Lower leg skin (tissue), 4 donors: ENCODE measurements at regions of chr3 and their contacts with region 1.

Region 1: DNA sequence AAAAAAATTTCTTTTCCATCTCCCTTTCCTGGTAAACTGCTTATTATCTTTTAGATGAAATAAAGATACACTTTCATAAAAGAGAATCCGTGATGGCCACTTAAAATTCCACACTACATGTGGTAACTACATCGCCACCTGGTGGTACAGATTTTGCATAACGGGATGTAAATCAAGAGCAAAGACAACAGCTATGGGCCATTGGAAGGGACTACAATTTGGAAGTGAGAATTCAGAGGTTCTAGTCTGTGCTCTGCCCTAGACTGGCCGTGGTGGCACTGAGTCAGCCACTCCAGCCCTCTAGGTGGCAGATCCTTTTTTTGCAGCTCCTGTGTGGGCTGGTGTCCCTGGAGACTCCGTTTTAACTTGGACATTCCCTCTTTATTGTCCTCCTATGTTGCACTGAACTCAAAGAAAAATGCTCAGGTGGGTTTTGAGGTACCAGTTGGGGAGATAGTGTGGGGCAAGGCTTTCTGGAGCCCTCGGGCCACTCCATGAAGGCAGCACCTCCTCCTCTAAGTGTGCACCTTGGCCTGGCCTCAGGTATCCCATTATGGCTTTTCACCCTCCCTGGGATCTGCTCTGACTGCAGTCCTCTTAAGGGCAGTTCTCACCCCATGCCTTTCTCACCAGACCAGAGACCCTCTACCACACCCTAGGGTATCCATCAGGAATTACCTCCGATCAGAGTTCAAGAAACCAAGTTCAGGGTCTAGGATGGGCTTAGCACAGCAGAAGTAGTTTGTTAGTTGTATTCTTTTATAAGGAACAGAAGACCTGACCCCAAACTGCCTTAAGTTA is 54.9 kb downstream of the SPSB4 start:
- DNase-seq: peak; percentile 81 to 85
- H3K4me3 ChIP-seq: no peak overlapping the region
- CTCF ChIP-seq: no peak
- POLR2A ChIP-seq: no peak

Region 2: DNA sequence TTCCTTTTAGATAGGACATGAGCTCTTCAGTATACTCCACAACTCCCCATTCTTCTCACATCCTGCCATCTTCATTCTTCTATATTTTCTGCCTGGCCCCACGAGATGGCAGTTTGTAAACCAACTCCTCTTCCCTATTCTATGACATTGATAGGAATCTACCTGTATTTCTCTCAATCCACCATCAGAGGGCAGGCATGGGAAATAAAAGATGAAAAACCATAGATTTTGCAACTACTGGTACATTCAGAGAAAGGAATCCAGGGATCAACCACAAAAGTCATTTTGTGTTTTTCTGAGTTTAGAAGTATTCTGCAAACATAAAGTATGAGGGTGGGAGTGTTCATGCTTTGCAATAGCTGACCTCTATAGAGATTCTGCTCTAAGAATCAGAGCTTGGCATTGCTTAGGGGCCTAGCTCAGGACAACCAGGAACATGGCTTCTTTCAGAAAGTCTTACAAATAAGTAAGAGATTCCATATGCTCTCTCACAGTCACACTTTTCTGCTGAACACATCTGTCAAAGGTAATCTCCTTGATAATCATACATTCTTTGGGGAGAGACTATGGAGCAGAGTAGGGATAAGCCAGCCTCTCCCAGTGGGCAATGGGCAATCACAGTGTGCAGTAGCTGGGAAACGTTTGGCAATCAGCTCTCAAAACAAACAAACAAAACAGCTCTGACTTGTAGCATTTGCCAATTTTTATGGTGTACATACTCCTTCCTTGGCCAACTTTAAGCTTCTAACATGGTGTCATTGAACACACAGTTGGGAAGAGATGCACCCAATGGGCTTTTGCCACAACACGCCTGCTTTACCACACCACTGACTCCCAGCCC is 207.5 kb before region 1 on chr3:
- intact Hi-C with region 1: loop called (anchors 10 kb)
- DNase-seq: peak in 1 of 2 donors; percentile 14
- H3K4me3 ChIP-seq: no peak overlapping the region
- CTCF ChIP-seq: peak in 1 of 3 donors; percentile 28
- POLR2A ChIP-seq: no peak

Region 3: DNA sequence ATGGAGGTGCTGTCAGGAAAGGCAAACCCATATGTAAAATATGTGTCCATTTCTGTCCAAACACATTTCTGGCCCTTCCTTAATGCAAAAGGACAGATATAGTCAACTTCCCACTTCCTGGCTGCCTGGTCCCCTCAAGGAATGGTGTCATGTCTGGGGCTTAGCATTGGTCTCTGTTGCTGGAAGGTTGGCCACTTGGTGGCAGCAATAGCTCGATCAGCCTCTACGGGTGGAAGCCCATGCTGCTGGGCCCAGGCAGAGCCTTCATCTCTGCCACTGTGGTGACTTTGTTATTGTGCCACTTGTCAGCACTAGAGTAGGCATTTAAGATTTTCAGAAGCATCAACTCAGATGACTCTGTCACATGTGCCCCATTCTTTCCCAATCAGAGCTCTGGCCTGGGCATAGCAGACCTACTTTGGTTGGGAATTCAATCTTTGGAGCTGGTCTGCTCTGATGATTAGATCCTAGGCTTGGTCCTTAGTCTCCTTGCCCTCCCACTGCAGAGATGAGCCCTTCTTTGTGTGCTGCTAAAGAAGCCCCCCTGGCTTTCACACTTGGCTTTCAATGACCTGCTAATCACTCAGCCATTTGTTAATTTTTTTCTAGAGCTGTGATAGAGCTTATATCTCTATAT is 105.9 kb before region 1 on chr3:
- intact Hi-C with region 1: loop called (anchors 10 kb)
- DNase-seq: peak in 1 of 2 donors; percentile 26
- H3K4me3 ChIP-seq: no peak overlapping the region
- CTCF ChIP-seq: peak in 1 of 3 donors; percentile 12
- POLR2A ChIP-seq: no peak